ENCODE measurements at regions of chr7 and their contacts with region 1.

Region 1: DNA sequence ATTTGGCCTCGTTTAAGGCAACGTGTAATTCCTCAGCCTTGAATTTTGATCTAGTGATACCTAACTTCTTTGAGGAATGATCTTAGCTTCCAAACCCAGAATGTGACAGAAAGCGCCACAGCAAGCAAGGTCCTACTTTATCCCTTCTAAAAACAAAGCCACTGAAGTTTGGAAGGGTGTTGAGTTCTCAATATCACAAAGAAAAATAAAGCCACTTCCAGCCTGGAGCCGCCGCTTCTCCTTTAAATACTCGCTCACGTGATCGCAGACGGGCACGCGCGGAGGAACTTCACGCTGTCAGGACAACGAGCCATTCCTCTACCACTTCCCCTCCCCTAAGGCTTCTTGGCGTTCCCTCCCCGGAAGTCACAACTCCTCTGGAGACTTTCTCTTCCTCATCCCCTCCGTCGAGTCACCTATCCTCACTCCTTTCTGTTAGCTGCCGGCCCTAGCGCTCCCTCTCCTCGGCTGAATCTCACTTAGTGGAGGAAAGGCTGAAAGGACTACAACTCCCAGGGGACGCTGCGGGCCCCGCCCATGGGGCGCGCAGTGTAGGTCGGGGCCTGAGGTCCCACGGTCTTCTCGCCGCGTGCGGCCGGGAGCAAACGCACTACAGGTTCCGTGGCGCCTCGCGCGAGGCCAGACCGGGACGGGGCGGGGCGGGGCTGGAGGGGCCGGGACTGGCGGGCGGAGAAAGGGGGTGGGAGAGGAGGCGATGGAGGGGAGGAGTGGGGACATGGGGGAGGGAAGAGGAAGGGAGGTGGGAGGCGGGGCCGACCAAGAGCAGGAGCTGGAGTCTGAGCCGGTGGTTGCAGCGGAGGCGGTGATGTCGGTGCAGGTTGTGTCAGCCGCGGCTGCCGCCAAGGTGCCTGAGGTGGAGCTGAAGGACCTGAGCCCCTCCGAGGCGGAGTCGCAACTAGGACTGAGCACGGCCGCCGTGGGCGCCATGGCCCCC is at the start of gene AHCYL2:
- DNase-seq: peak; percentile 99
- H3K4me3 Mint-ChIP-seq: peak within 1 kb of the TSS; percentile 92
- H3K27ac Mint-ChIP-seq: peak within 1 kb of the TSS; percentile 88
- H3K4me1 Mint-ChIP-seq: peaks cover 36% of the 10 kb centered on the region
- H3K27me3 Mint-ChIP-seq: peaks cover 4% of the 10 kb centered on the region

Region 2: DNA sequence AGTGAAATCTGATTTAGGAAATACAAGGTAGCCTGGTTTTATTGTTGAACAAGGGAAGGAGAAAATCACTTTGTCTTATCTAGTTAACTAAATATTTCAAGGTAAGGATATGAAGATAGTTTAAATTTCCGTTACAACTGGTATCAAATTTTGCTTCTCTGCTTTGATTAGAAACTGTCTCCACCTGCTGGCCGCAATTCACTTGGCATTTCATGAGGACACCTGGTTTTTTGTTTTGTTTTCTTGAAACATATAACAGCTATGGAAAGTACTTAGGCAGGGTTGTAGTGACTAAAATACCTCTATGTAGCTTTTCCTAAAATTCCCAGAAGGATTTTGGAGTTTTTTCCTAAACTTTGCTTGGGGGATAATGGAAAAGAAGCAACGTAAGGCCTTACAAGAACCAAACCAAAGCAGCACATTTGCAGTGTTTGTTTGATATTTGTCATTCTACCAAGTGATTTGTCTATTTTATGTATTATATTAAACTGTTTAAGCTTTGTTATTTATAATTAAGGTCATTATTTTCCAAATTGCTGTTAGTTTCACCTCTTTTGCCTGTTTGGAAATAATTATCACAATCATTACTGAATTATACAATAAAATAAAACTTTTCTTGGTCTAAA is 73.9 kb after region 1 on chr7:
- CTCF ChIA-PET with region 1: interaction called, 100 read pairs
- DNase-seq: peak; percentile 73
- H3K4me3 Mint-ChIP-seq: no peak overlapping the region
- H3K27ac Mint-ChIP-seq: no peak overlapping the region
- H3K4me1 Mint-ChIP-seq: no peaks in the 10 kb centered on the region
- H3K27me3 Mint-ChIP-seq: no peaks in the 10 kb centered on the region